PC-3 (cell line): ENCODE measurements at regions of chr3 and their contacts with region 1.

Region 1: GRCh38 chr3:24069045-24069444 is 124.0 kb downstream of the NR1D2 start:
- DNase-seq: peak; percentile 42
- ATAC-seq: peak; percentile 48
- H3K4me3 ChIP-seq: no peak overlapping the region
- H3K27ac ChIP-seq: no peak overlapping the region
- H3K4me1 ChIP-seq: no peaks in the 10 kb centered on the region
- H3K27me3 ChIP-seq: no peaks in the 10 kb centered on the region
- CTCF ChIP-seq: peak; percentile 62

Region 2: GRCh38 chr3:24160424-24161095 is 91.5 kb after region 1 on chr3:
- CTCF ChIA-PET with region 1: no interaction called
- POLR2A ChIA-PET with region 1: no interaction called
- intact Hi-C with region 1: loop called (anchors 10 kb)
- DNase-seq: no peak
- ATAC-seq: no peak
- H3K4me3 ChIP-seq: no peak overlapping the region
- H3K27ac ChIP-seq: no peak overlapping the region
- H3K4me1 ChIP-seq: peaks cover 33% of the 10 kb centered on the region
- H3K27me3 ChIP-seq: no peaks in the 10 kb centered on the region
- CTCF ChIP-seq: no peak

Region 3: GRCh38 chr3:24237971-24238767 is 169.1 kb after region 1 on chr3:
- CTCF ChIA-PET with region 1: no interaction called
- POLR2A ChIA-PET with region 1: no interaction called
- intact Hi-C with region 1: loop called (anchors 1 kb)
- DNase-seq: peak; percentile 92
- ATAC-seq: peak; percentile 68
- H3K4me3 ChIP-seq: no peak overlapping the region
- H3K27ac ChIP-seq: peak overlapping the region; percentile 86
- H3K4me1 ChIP-seq: peaks cover 60% of the 10 kb centered on the region
- H3K27me3 ChIP-seq: no peaks in the 10 kb centered on the region
- CTCF ChIP-seq: peak; percentile 76